ENCODE measurements at regions of chr3 and their contacts with region 1.

Region 1: GRCh38 chr3:180959691-180960090 is 29.8 kb downstream of the DNAJC19 start:
- DNase-seq: no peak
- ATAC-seq: no peak

Region 2: GRCh38 chr3:180199417-180199995 is 760.2 kb before region 1 on chr3:
- intact Hi-C with region 1: loop called (anchors 5 kb)
- DNase-seq: no peak
- ATAC-seq: no peak